Activated CD4-positive, alpha-beta T cell treated with anti-CD3 and anti-CD28 coated beads for 36 hours (primary cell): ENCODE measurements at regions of chr2 and their contacts with region 1.

Region 1: GRCh38 chr2:7437716-7438632 is 520.8 kb downstream of the RNF144A start:
- DNase-seq: peak; percentile 68
- ATAC-seq: peak; percentile 57
- H3K4me3 Mint-ChIP-seq: no peak overlapping the region
- H3K27ac Mint-ChIP-seq: peak overlapping the region; percentile 91
- H3K4me1 Mint-ChIP-seq: peaks cover 64% of the 10 kb centered on the region
- H3K27me3 Mint-ChIP-seq: peaks cover 1% of the 10 kb centered on the region

Region 2: GRCh38 chr2:7363906-7364305 is 74.1 kb before region 1 on chr2:
- CTCF ChIA-PET with region 1: no interaction called
- POLR2A ChIA-PET with region 1: no interaction called
- intact Hi-C with region 1: no loop called
- DNase-seq: no peak
- ATAC-seq: no peak
- H3K4me3 Mint-ChIP-seq: no peak overlapping the region
- H3K27ac Mint-ChIP-seq: no peak overlapping the region
- H3K4me1 Mint-ChIP-seq: no peaks in the 10 kb centered on the region
- H3K27me3 Mint-ChIP-seq: no peaks in the 10 kb centered on the region

Region 3: GRCh38 chr2:7467782-7468447 is 29.9 kb after region 1 on chr2:
- CTCF ChIA-PET with region 1: no interaction called
- POLR2A ChIA-PET with region 1: no interaction called
- intact Hi-C with region 1: loop called (anchors 1 to 2 kb)
- DNase-seq: peak; percentile 69
- ATAC-seq: peak; percentile 96
- H3K4me3 Mint-ChIP-seq: peak overlapping the region; percentile 15
- H3K27ac Mint-ChIP-seq: peak overlapping the region; percentile 84
- H3K4me1 Mint-ChIP-seq: peaks cover 45% of the 10 kb centered on the region
- H3K27me3 Mint-ChIP-seq: peaks cover 2% of the 10 kb centered on the region

Region 4: GRCh38 chr2:7588295-7588694 is 150.3 kb after region 1 on chr2:
- CTCF ChIA-PET with region 1: interaction called, 3 read pairs
- POLR2A ChIA-PET with region 1: no interaction called
- intact Hi-C with region 1: loop called (anchors 2 to 5 kb)
- DNase-seq: no peak
- ATAC-seq: peak; percentile 71
- H3K4me3 Mint-ChIP-seq: no peak overlapping the region
- H3K27ac Mint-ChIP-seq: peak overlapping the region; percentile 71
- H3K4me1 Mint-ChIP-seq: peaks cover 41% of the 10 kb centered on the region
- H3K27me3 Mint-ChIP-seq: no peaks in the 10 kb centered on the region

Region 5: DNA sequence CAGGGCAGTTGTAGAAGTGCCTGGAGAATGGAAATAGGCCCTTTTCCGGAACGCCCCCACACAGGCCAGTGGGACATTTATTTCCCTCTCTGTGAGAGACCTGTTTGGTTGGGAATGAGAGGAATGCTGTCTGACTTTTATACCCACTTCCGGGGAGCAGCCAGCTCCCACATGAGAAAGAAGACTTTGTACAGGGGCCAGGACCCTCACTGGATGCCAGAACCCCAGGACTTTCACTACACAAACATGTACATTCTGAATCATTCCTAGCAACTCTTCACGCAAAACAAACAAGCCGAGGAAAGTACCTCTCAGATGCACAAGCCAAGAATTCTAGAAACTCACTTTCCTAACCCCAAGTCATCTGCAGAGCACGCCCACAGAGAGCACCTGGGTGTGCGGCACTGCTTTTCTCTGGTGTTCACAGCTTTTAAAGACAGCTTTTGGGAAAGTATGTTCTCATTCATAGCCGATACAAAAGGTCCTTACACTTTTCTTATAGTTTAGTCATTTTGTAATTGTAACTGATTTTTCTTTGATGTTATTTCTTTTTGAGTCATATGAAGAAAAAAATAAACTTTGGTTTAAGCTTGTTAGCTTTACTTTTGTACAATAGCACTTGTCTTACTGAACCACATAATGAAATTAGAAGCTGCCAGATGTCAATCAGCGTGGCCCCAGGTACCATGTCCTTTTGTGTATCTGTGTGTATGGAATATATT is 387.8 kb after region 1 on chr2:
- CTCF ChIA-PET with region 1: no interaction called
- POLR2A ChIA-PET with region 1: no interaction called
- intact Hi-C with region 1: loop called (anchors 2 kb)
- DNase-seq: peak; percentile 86
- ATAC-seq: peak; percentile 95
- H3K4me3 Mint-ChIP-seq: peak overlapping the region; percentile 26
- H3K27ac Mint-ChIP-seq: peak overlapping the region; percentile 93
- H3K4me1 Mint-ChIP-seq: peaks cover 27% of the 10 kb centered on the region
- H3K27me3 Mint-ChIP-seq: peaks cover 3% of the 10 kb centered on the region

Region 6: GRCh38 chr2:7900593-7900992 is 462.6 kb after region 1 on chr2:
- CTCF ChIA-PET with region 1: no interaction called
- POLR2A ChIA-PET with region 1: no interaction called
- intact Hi-C with region 1: no loop called
- DNase-seq: no peak
- ATAC-seq: no peak
- H3K4me3 Mint-ChIP-seq: no peak overlapping the region
- H3K27ac Mint-ChIP-seq: no peak overlapping the region
- H3K4me1 Mint-ChIP-seq: peaks cover 18% of the 10 kb centered on the region
- H3K27me3 Mint-ChIP-seq: peaks cover 8% of the 10 kb centered on the region

Region 7: GRCh38 chr2:7938371-7938770 is 500.4 kb after region 1 on chr2:
- CTCF ChIA-PET with region 1: no interaction called
- POLR2A ChIA-PET with region 1: no interaction called
- intact Hi-C with region 1: loop called (anchors 2 to 5 kb)
- DNase-seq: no peak
- ATAC-seq: no peak
- H3K4me3 Mint-ChIP-seq: no peak overlapping the region
- H3K27ac Mint-ChIP-seq: peak overlapping the region; percentile 9
- H3K4me1 Mint-ChIP-seq: peaks cover 26% of the 10 kb centered on the region
- H3K27me3 Mint-ChIP-seq: peaks cover 7% of the 10 kb centered on the region

Region 8: GRCh38 chr2:8152392-8153257 is 714.7 kb after region 1 on chr2:
- CTCF ChIA-PET with region 1: no interaction called
- POLR2A ChIA-PET with region 1: no interaction called
- intact Hi-C with region 1: loop called in 1 of 2 experiments (anchors 5 kb)
- DNase-seq: no peak
- ATAC-seq: no peak
- H3K4me3 Mint-ChIP-seq: no peak overlapping the region
- H3K27ac Mint-ChIP-seq: no peak overlapping the region
- H3K4me1 Mint-ChIP-seq: peaks cover 30% of the 10 kb centered on the region
- H3K27me3 Mint-ChIP-seq: no peaks in the 10 kb centered on the region

Region 9: GRCh38 chr2:8956774-8957173 is 1518.8 kb after region 1 on chr2:
- CTCF ChIA-PET with region 1: no interaction called
- POLR2A ChIA-PET with region 1: no interaction called
- intact Hi-C with region 1: no loop called
- DNase-seq: no peak
- ATAC-seq: no peak
- H3K4me3 Mint-ChIP-seq: no peak overlapping the region
- H3K27ac Mint-ChIP-seq: no peak overlapping the region
- H3K4me1 Mint-ChIP-seq: peaks cover 2% of the 10 kb centered on the region
- H3K27me3 Mint-ChIP-seq: peaks cover 11% of the 10 kb centered on the region